Natural killer cell (primary cell): ENCODE measurements at regions of chr5 and their contacts with region 1.

Region 1: GRCh38 chr5:43040287-43041098 is at the start of gene ANXA2R:
- DNase-seq: peak; percentile 83 to 98
- ATAC-seq: peak; percentile 54 to 73 (median 56)
- H3K4me3 ChIP-seq: peak within 1 kb of the TSS; percentile 74
- H3K4me3 Mint-ChIP-seq: peak within 1 kb of the TSS; percentile 93
- H3K27ac ChIP-seq: peak within 1 kb of the TSS; percentile 98
- H3K27ac Mint-ChIP-seq: peak within 1 kb of the TSS; percentile 92 to 96
- H3K4me1 ChIP-seq: peaks cover 61% of the 10 kb centered on the region
- H3K4me1 Mint-ChIP-seq: peaks cover 74 to 83% of the 10 kb centered on the region in 2 donors
- H3K27me3 ChIP-seq: no peaks in the 10 kb centered on the region
- H3K27me3 Mint-ChIP-seq: no peaks in the 10 kb centered on the region
- CTCF ChIP-seq: peak; percentile 72
- total RNA-seq, gene ANXA2R: 34.3 to 55.2 (median 38.0) TPM

Region 2: GRCh38 chr5:42994246-42995151 is 46.0 kb before region 1 on chr5:
- intact Hi-C with region 1: loop called (anchors 1 kb)
- DNase-seq: peak; percentile 82 to 94
- ATAC-seq: peak; percentile 63 to 81 (median 64)
- H3K4me3 ChIP-seq: peak overlapping the region; percentile 69
- H3K4me3 Mint-ChIP-seq: peak overlapping the region; percentile 98
- H3K27ac ChIP-seq: peak overlapping the region; percentile 95
- H3K27ac Mint-ChIP-seq: peak overlapping the region; percentile 95 to 99
- H3K4me1 ChIP-seq: peaks cover 40% of the 10 kb centered on the region
- H3K4me1 Mint-ChIP-seq: peaks cover 44 to 46% of the 10 kb centered on the region in 2 donors
- H3K27me3 ChIP-seq: no peaks in the 10 kb centered on the region
- H3K27me3 Mint-ChIP-seq: no peaks in the 10 kb centered on the region
- CTCF ChIP-seq: peak; percentile 85

Region 3: DNA sequence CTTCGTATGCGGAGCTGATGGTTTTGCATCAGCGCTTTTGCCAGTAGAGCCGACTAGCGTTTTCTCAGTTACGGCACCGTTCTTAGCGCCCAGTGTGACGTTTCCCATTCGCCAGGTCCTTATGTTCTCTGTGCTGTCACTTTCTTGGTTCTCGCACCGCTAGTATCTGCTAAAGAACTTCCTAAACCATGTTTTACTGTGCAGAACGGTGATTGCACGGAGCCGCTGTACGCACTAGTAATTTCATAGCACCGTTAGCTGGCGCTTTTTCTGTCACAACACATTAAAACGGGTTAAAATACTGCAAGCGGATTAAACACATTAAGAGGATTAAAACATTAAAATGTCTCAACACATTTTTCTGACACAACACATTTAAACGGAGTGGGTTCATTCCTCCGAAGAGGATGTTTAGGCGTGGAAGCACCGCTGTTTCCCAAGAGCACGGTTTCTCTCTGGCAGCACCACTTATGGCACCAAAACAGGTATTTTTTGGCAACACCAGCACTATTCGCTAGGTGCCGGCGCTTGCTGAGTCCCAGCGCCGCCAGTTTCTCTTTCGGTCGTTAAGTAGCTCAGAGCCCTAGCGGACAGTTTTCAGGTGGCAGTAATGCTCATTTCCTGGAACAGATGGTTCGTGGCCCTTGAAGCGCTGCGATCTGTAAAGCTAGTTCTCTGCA is 20.7 kb before region 1 on chr5:
- intact Hi-C with region 1: loop called (anchors 1 kb)
- DNase-seq: peak; percentile 73 to 96
- ATAC-seq: peak; percentile 64 to 83 (median 64)
- H3K4me3 ChIP-seq: peak overlapping the region; percentile 58
- H3K4me3 Mint-ChIP-seq: peak overlapping the region; percentile 91
- H3K27ac ChIP-seq: peak overlapping the region; percentile 93
- H3K27ac Mint-ChIP-seq: peak overlapping the region; percentile 99 to 100
- H3K4me1 ChIP-seq: peaks cover 22% of the 10 kb centered on the region
- H3K4me1 Mint-ChIP-seq: peaks cover 45 to 56% of the 10 kb centered on the region in 2 donors
- H3K27me3 ChIP-seq: no peaks in the 10 kb centered on the region
- H3K27me3 Mint-ChIP-seq: no peaks in the 10 kb centered on the region
- CTCF ChIP-seq: peak; percentile 61

Region 4: GRCh38 chr5:43105369-43106289 is 65.1 kb after region 1 on chr5:
- intact Hi-C with region 1: loop called (anchors 2 kb)
- DNase-seq: peak; percentile 87 to 98
- ATAC-seq: peak; percentile 92 to 99 (median 94)
- H3K4me3 ChIP-seq: peak overlapping the region; percentile 35
- H3K4me3 Mint-ChIP-seq: peak overlapping the region; percentile 88
- H3K27ac ChIP-seq: peak overlapping the region; percentile 64
- H3K27ac Mint-ChIP-seq: peak overlapping the region; percentile 87 to 91
- H3K4me1 ChIP-seq: peaks cover 16% of the 10 kb centered on the region
- H3K4me1 Mint-ChIP-seq: peaks cover 12 to 25% of the 10 kb centered on the region in 2 donors
- H3K27me3 ChIP-seq: no peaks in the 10 kb centered on the region
- H3K27me3 Mint-ChIP-seq: no peaks in the 10 kb centered on the region
- CTCF ChIP-seq: peak; percentile 100